ENCODE measurements at regions of chr17 and their contacts with region 1.

Region 1: GRCh38 chr17:38982858-38983746 is 15.9 kb upstream of the FBXO47 start:
- DNase-seq: peak in 1 of 3 donors; percentile 41
- ATAC-seq: peak; percentile 78 to 85
- H3K4me3 ChIP-seq: no peak overlapping the region
- H3K27ac ChIP-seq: no peak overlapping the region
- H3K4me1 ChIP-seq: no peaks in the 10 kb centered on the region
- H3K27me3 ChIP-seq: no peaks in the 10 kb centered on the region

Region 2: DNA sequence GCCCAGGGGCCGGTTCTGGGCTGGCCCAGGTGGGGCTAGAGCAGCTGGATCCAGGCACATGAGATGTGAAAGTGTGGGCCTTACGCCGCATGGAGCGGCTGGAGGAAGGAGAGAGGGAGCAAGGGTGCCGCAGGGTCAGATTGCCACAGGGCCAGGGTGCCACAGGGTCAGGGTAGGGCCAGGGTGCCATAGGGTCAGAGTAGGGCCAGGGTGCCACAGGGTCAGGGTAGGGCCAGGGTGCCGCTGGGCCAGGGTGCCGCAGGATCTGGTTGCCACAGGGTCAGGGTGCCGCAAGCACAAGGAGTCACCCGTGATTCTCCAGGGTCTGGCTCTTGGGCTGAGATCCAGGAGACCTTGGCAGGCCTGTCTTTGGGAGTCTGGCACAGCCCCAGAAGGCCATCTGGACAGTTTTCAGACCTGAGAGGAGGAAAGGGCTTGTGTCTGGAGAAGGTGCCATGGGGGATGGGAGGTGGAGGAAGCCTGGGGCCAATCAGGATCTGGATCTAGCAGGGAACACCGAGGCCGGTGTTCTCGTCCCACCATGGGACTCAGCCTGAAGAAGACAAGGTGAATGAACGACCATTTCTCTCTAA is 70.8 kb before region 1 on chr17:
- intact Hi-C with region 1: no loop called
- DNase-seq: peak; percentile 77 to 88 (median 85)
- ATAC-seq: peak; percentile 35 to 52
- H3K4me3 ChIP-seq: no peak overlapping the region
- H3K27ac ChIP-seq: no peak overlapping the region
- H3K4me1 ChIP-seq: peaks cover 11% of the 10 kb centered on the region
- H3K27me3 ChIP-seq: no peaks in the 10 kb centered on the region

Region 3: GRCh38 chr17:38994026-38994425 is 10.9 kb after region 1 on chr17:
- intact Hi-C with region 1: no loop called
- DNase-seq: no peak
- ATAC-seq: no peak
- H3K4me3 ChIP-seq: no peak overlapping the region
- H3K27ac ChIP-seq: no peak overlapping the region
- H3K4me1 ChIP-seq: peaks cover 2% of the 10 kb centered on the region
- H3K27me3 ChIP-seq: no peaks in the 10 kb centered on the region

Region 4: GRCh38 chr17:39057701-39058206 is 74.7 kb after region 1 on chr17:
- intact Hi-C with region 1: loop called in 2 of 4 experiments (anchors 10 kb)
- DNase-seq: no peak
- ATAC-seq: no peak
- H3K4me3 ChIP-seq: peak overlapping the region; percentile 10
- H3K27ac ChIP-seq: no peak overlapping the region
- H3K4me1 ChIP-seq: peaks cover 3% of the 10 kb centered on the region
- H3K27me3 ChIP-seq: no peaks in the 10 kb centered on the region

Region 5: GRCh38 chr17:39069114-39069756 is 86.1 kb after region 1 on chr17:
- intact Hi-C with region 1: loop called in 2 of 4 experiments (anchors 10 kb)
- DNase-seq: no peak
- ATAC-seq: peak; percentile 54 to 70
- H3K4me3 ChIP-seq: no peak overlapping the region
- H3K27ac ChIP-seq: no peak overlapping the region
- H3K4me1 ChIP-seq: no peaks in the 10 kb centered on the region
- H3K27me3 ChIP-seq: no peaks in the 10 kb centered on the region

Region 6: GRCh38 chr17:39080421-39081078 is 97.4 kb after region 1 on chr17:
- intact Hi-C with region 1: loop called in 1 of 4 experiments (anchors 10 kb)
- DNase-seq: peak; percentile 54 to 85 (median 80)
- ATAC-seq: peak; percentile 35 to 44
- H3K4me3 ChIP-seq: no peak overlapping the region
- H3K27ac ChIP-seq: no peak overlapping the region
- H3K4me1 ChIP-seq: peaks cover 7% of the 10 kb centered on the region
- H3K27me3 ChIP-seq: no peaks in the 10 kb centered on the region

Region 7: GRCh38 chr17:39153599-39154051 is 170.5 kb after region 1 on chr17:
- intact Hi-C with region 1: loop called (anchors 1 to 5 kb)
- DNase-seq: peak; percentile 85 to 97 (median 94)
- ATAC-seq: peak; percentile 87 to 89
- H3K4me3 ChIP-seq: peak overlapping the region; percentile 89
- H3K27ac ChIP-seq: peak overlapping the region; percentile 77
- H3K4me1 ChIP-seq: peaks cover 5% of the 10 kb centered on the region
- H3K27me3 ChIP-seq: no peaks in the 10 kb centered on the region

Region 8: GRCh38 chr17:39235555-39236449 is 252.7 kb after region 1 on chr17:
- intact Hi-C with region 1: loop called in 1 of 4 experiments (anchors 10 kb)
- DNase-seq: no peak
- ATAC-seq: peak in 1 of 2 donors; percentile 36
- H3K4me3 ChIP-seq: no peak overlapping the region
- H3K27ac ChIP-seq: no peak overlapping the region
- H3K4me1 ChIP-seq: no peaks in the 10 kb centered on the region
- H3K27me3 ChIP-seq: no peaks in the 10 kb centered on the region

Measured in right cardiac atrium (tissue), 5 donors.